ENCODE measurements at regions of chr12 and their contacts with region 1.

Region 1: DNA sequence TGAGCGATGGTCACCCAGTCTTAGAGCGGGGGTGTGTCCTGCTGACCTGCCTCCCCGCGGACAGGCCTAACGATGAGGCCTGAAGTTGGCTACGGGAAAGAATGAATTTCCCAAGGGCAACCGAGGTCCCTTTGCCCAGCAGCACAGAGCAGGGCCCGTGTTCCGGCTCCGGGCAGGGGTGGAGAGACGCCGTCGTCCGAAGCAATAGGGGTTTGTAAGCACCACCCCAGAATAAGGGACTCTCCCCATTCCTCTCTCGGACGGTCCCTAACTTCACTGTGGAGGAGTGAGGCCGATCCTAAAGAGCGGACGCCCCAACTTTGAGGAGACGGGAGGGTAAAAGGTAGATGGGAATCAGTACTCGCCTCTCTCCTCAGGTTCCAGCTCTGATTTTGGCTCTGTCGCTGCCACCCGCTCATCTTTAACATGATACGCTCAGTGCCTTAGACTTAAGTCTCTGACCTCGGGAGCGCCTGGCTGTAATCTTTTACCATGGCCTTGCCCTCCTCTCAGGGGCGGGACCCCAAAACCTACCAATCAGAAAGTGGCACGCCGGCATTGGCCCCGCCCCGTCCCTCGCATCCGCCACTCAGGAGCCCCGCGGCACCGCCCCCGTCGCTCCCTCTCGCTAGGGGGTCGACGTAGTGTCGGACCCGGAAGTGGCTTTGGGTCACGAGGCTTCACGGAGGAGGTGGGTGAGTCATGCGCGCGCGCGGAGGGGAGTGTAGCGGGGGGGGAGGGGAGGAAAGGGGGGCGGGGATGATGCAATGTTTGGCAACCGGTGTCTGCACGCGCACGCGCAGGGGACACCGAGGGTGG is at the start of gene DDIT3:
- DNase-seq: peak; percentile 100
- H3K4me3 Mint-ChIP-seq: peak within 1 kb of the TSS; percentile 97
- H3K27ac Mint-ChIP-seq: peak within 1 kb of the TSS; percentile 100
- H3K4me1 Mint-ChIP-seq: peaks cover 67% of the 10 kb centered on the region
- H3K27me3 Mint-ChIP-seq: no peaks in the 10 kb centered on the region
- total RNA-seq, gene DDIT3: 44.6 to 45.6 TPM

Region 2: DNA sequence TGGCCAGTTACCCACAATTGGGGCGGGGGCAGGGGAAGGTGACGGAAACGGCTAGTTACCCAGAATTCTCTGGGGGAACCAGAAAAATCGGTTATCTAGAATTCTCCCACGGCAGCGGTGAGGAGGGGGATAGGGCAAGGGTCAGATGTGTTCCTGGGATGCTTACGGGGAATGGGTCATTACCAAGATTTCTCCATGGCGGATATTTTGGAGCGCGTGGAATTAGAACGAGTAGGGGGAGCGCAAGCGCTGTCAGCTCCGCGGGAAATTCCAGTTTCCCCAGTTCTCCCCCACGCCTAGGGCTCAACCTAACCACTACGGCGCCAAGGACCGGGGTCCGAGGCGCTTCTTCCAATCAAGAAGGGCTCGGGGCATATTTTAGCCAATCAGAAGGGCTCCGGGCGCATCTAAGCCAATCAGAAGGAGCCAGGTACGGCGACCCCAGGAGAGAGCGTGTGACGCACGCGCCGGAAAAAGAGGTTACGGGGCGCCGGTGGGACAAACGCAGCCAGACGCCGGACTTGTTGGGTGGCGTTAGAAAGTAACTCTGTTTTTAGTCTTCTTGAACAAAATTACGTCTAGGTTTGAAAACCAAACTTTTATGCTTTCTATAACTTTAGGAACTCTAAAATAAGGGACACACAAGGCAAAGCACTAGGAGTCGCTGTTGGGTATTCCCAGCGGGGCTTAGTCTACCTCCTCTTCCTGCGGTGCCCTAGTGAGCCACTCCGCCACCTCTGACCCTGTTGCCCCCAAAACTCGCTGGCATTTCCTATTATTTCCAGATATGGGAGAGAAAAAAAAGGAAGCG is 1186.4 kb before region 1 on chr12 and contains the start of gene PAN2:
- CTCF ChIA-PET with region 1: no interaction called
- intact Hi-C with region 1: loop called (anchors 10 kb)
- DNase-seq: peak; percentile 98
- H3K4me3 Mint-ChIP-seq: peak within 1 kb of the TSS; percentile 97
- H3K27ac Mint-ChIP-seq: peak within 1 kb of the TSS; percentile 100
- H3K4me1 Mint-ChIP-seq: peaks cover 44% of the 10 kb centered on the region
- H3K27me3 Mint-ChIP-seq: no peaks in the 10 kb centered on the region
- total RNA-seq, gene PAN2: 82.7 to 85.4 TPM

Region 3: DNA sequence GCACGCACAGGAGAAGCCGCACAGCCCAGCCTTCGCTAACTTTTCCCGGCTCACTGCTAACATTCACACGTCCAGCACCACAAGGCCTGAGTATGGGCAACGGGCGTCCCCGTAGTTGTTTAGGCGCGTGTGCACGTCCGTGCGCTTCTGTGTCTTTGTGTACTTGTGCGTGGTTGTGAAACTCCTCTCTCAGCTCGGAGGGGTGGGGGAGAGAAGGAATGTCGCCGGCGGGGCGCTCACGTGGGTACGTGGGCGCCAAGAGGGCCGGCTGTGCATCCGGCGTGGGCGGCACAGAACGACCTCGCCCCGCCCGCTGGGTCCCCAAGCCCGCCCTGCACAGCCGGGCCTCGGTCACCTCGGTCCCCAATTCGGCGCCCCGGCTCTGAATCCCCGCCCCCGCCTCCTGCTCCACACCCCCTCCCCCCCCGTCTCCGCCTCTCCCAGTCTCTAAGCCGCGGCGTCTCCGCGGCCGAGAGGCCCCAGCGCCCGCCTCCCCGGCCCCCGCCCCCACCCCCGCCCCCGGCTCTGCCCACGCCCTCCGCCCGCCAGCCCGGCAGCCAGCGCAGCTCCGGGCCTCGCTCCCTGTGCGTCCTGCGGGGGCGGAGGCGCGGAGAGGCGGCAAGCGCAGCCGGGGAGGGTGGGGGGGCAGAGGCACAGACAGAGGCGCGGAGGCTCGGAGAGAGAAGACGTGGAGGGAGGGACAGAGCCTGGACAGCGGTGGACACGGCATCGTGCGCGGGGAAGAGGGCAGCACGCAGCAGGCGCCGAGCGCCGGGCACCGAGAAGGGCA is 431.6 kb before region 1 on chr12 and contains the start of gene NAB2:
- CTCF ChIA-PET with region 1: no interaction called
- intact Hi-C with region 1: loop called (anchors 2 kb)
- DNase-seq: peak; percentile 92
- H3K4me3 Mint-ChIP-seq: peak within 1 kb of the TSS; percentile 91
- H3K27ac Mint-ChIP-seq: peak within 1 kb of the TSS; percentile 99
- H3K4me1 Mint-ChIP-seq: peaks cover 61% of the 10 kb centered on the region
- H3K27me3 Mint-ChIP-seq: no peaks in the 10 kb centered on the region
- total RNA-seq, gene NAB2: 18.4 to 19.1 TPM

Region 4: DNA sequence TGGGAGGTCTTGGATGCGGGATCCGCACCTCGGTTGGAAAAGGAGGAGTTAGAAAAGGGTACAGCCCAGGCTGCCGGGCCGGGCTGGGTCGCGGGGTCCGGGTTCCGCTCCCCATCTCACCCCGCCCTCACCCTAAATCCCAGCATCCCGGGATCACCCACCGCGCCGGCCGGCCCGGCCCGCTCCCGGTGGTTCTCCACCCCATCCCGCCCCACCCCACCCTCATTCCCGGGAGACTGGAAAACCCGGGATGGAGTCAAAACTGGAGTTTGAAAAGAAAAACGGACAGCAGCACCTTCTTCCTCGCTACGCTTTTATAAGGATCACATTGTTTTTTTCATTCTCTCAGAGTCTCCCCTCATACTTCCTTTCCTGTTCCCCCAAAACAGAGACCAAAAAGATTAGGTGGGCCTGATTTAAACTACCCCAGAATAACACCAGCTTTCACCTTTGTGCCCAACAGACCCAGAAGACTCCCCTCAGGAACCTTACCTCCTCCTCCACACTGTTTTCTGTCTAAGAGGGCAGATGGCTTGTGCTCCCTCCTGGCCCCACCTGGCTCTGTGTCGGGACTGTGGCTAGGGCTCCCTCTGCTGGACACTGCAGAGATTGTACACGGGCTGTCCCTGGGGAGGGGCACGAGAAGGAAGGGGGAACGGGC is 57.9 kb before region 1 on chr12:
- CTCF ChIA-PET with region 1: interaction called, 12 read pairs
- intact Hi-C with region 1: loop called (anchors 1 kb)
- DNase-seq: peak; percentile 95
- H3K4me3 Mint-ChIP-seq: peak overlapping the region; percentile 79
- H3K27ac Mint-ChIP-seq: peak overlapping the region; percentile 19
- H3K4me1 Mint-ChIP-seq: peaks cover 47% of the 10 kb centered on the region
- H3K27me3 Mint-ChIP-seq: peaks cover 9% of the 10 kb centered on the region

Region 5: DNA sequence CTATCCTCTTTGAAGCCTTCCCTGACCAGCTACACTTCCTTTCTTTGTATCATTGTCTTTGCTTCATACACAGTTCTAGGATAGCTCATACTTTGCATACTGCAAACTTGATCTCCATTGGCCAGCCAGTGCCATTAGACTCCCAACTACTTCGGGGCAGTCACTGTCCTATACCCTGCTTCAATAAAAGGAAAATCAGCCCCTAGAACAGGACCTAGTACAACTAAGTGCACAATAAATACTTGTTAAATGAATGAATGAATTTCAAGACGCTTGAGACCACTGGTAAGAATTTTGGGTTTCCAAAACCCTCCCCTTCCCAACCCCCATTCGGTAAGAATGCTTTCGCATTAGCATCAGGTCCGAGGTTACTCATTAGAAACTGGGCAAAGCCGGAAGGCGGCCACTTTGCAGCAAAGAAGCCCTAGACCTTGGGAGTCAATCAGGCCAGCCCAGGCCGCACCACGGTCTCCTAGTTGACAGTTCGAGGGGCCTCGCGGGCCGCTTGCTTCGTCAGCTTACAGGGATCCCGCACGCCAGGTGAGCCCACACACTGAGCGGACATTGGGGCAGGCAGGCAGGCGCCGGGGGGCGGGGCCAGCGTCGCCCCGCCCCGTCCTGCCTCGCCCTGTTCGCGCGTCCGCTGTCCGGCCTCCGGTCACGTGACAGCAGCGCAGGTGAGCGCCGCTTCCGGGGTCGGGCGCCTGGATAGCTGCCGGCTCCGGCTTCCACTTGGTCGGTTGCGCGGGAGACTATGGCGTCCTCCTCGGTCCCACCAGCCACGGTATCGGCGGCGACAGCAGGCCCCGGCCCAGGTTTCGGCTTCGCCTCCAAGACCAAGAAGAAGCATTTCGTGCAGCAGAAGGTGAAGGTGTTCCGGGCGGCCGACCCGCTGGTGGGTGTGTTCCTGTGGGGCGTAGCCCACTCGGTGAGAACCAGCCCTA is 70.5 kb after region 1 on chr12 and contains the start of gene PIP4K2C:
- CTCF ChIA-PET with region 1: no interaction called
- intact Hi-C with region 1: loop called (anchors 1 kb)
- DNase-seq: peak; percentile 83
- H3K4me3 Mint-ChIP-seq: peak within 1 kb of the TSS; percentile 82
- H3K27ac Mint-ChIP-seq: peak within 1 kb of the TSS; percentile 73
- H3K4me1 Mint-ChIP-seq: peaks cover 21% of the 10 kb centered on the region
- H3K27me3 Mint-ChIP-seq: no peaks in the 10 kb centered on the region
- total RNA-seq, gene PIP4K2C: 11.8 to 12.7 TPM

Region 6: DNA sequence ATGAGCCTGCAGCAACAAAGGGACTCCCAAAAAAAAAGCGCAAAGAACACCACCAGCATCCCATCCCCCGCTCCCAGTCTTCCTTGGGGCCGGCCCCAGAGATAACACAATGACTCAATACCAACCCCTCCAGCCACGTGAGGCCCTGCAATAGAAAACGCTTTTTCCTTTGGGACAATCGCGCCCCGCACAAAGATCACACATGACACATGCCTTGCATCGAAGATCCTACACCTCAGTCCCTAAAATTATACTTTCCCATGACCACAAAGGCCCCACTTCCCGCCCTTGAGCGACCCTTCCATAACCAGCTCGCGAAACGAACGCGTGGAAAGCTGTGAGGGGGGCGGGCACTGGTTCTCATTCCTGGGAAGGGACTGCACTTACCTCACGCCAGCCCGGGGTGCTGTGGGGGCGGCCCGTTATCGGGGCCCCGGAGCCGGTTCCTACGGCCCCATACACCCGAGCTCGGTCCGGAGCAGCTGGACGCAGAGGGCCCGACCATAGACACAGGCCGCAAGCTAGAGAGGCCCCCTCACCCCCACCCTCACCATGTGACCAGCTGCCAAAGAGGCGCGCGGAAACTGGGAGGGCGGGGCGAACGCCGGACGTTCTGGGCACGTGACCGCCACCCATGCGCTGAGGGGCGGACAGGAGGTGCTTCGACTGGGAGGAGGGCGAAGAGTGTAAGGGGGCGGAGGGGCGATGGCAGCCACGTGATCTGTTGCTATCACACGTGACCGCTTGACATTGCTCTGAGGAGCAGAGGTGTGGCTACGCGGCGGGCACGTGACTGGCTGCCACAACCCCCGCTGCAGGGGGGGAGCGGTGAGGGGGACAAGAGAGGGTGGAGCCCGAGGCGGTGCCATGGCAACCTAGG is 231.8 kb after region 1 on chr12 and contains the start of gene CDK4:
- CTCF ChIA-PET with region 1: no interaction called
- intact Hi-C with region 1: loop called (anchors 1 kb)
- DNase-seq: peak; percentile 99
- H3K4me3 Mint-ChIP-seq: peak within 1 kb of the TSS; percentile 100
- H3K27ac Mint-ChIP-seq: peak within 1 kb of the TSS; percentile 99
- H3K4me1 Mint-ChIP-seq: peaks cover 51% of the 10 kb centered on the region
- H3K27me3 Mint-ChIP-seq: no peaks in the 10 kb centered on the region
- total RNA-seq, gene CDK4: 194 to 202 TPM